Left lung (tissue), 14 donors: ENCODE measurements at regions of chr12 and their contacts with region 1.

Region 1: GRCh38 chr12:50637870-50638481 is 125.9 kb upstream of the ATF1 start:
- DNase-seq: peak in 2 of 4 donors; percentile 41 to 48
- ATAC-seq: peak; percentile 51
- H3K4me3 ChIP-seq: no peak overlapping the region
- H3K27ac ChIP-seq: no peak overlapping the region
- H3K4me1 ChIP-seq: peaks cover 7 to 25% of the 10 kb centered on the region in 2 donors
- H3K27me3 ChIP-seq: no peaks in the 10 kb centered on the region
- CTCF ChIP-seq: peak; percentile 61 to 62

Region 2: GRCh38 chr12:50504798-50505385 is 133.1 kb before region 1 on chr12 and contains the start of gene DIP2B:
- intact Hi-C with region 1: loop called in 1 of 2 experiments (anchors 2 kb)
- DNase-seq: peak; percentile 89 to 100 (median 96)
- ATAC-seq: peak; percentile 97
- H3K4me3 ChIP-seq: peak within 1 kb of the TSS; percentile 80 to 91
- H3K27ac ChIP-seq: peak within 1 kb of the TSS; percentile 92 to 97
- H3K4me1 ChIP-seq: peaks cover 34 to 49% of the 10 kb centered on the region in 2 donors
- H3K27me3 ChIP-seq: no peaks in the 10 kb centered on the region
- CTCF ChIP-seq: peak; percentile 89 to 96
- polyA plus RNA-seq, gene DIP2B: 33.0 to 38.6 (median 35.3) TPM